Thyroid gland (tissue), 4 donors: ENCODE measurements at regions of chr9 and their contacts with region 1.

Region 1: GRCh38 chr9:2014696-2015580 is at the start of gene SMARCA2:
- DNase-seq: peak; percentile 99
- H3K4me3 ChIP-seq: peak within 1 kb of the TSS; percentile 73 to 93 (median 73)
- H3K27ac ChIP-seq: peak within 1 kb of the TSS; percentile 96 to 99 (median 99)
- H3K4me1 ChIP-seq: peaks cover 14 to 17% of the 10 kb centered on the region in 2 donors
- H3K27me3 ChIP-seq: no peaks in the 10 kb centered on the region
- CTCF ChIP-seq: peak in 2 of 6 experiments; percentile 5 to 17
- POLR2A ChIP-seq: peak; percentile 76 to 98
- total RNA-seq, gene SMARCA2: 148 to 217 (median 196) TPM

Region 2: GRCh38 chr9:2053883-2054845 is 39.2 kb after region 1 on chr9:
- intact Hi-C with region 1: loop called (anchors 5 kb)
- DNase-seq: peak; percentile 91
- H3K4me3 ChIP-seq: no peak overlapping the region
- H3K27ac ChIP-seq: peak overlapping the region; percentile 88 to 90 (median 90)
- H3K4me1 ChIP-seq: peaks cover 34 to 43% of the 10 kb centered on the region in 2 donors
- H3K27me3 ChIP-seq: no peaks in the 10 kb centered on the region
- CTCF ChIP-seq: no peak
- POLR2A ChIP-seq: peak in 1 of 2 donors; percentile 85